ENCODE measurements at regions of chr1 and their contacts with region 1.

Region 1: GRCh38 chr1:202315576-202316168 is 26.1 kb downstream of the UBE2T start:
- DNase-seq: peak; percentile 80
- CTCF ChIP-seq: peak; percentile 96

Region 2: GRCh38 chr1:202205491-202206190 is 110.0 kb before region 1 on chr1:
- CTCF ChIA-PET with region 1: no interaction called
- POLR2A ChIA-PET with region 1: no interaction called
- DNase-seq: no peak
- CTCF ChIP-seq: no peak

Region 3: GRCh38 chr1:202274611-202275010 is 41.1 kb before region 1 on chr1:
- CTCF ChIA-PET with region 1: interaction called, 10 read pairs
- POLR2A ChIA-PET with region 1: no interaction called
- DNase-seq: peak; percentile 50
- CTCF ChIP-seq: peak; percentile 56

Region 4: DNA sequence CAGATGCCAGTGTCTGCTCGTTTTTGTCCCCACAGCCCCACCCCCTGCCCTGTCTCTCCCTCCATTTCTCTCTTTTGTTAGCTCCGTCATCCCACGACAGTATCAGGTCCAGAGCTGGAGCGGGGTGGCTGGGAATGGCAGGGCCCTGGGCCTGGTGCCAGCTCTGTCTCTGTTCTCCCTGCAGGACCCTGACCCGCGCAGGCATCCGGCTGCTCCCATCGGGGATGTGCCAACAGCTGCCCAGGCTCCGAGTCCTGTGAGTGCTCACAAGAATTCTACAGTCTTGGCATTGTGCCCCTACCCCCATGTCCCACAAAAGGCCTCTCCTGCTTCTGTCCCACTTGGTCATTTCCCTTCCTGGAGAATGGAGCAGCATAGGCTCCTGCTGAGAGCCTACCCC is 11.3 kb before region 1 on chr1:
- CTCF ChIA-PET with region 1: interaction called, 18 read pairs
- POLR2A ChIA-PET with region 1: no interaction called
- DNase-seq: no peak
- CTCF ChIP-seq: no peak

Region 5: GRCh38 chr1:202329891-202330290 is 14.2 kb after region 1 on chr1:
- CTCF ChIA-PET with region 1: interaction called, 17 read pairs
- POLR2A ChIA-PET with region 1: no interaction called
- DNase-seq: no peak
- CTCF ChIP-seq: no peak

Region 6: DNA sequence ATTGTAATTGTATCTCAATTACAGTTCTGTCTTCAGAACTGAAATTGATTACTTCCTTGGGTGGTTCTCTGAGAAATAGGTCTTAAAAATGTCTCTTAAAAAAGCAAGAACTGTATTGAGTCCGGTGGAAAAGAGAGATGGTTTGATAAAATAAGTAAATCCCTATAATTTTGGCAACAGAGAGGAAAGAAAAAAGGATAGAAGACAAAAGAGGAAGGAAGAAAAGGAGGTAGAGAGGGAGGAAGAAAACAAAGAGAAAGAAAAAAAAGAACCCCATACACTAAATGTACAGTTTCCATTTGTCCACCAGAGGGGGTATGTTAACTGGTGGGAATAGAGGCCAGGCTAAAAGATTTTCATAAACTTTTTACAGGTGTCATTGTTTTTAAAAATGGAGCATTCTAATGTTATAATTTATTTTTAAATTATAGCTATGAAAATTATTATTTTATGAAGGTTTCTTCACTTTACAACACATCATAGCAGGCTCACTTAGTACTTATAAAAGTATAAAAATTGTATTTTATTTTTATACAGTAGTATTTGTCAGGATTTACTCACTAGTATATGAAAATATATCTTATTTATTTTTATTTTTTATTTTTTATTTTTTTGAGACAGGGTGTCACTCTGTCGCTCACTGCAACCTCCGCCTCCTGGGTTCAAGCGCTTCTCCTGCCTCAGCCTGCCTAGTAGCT is 28.1 kb after region 1 on chr1:
- CTCF ChIA-PET with region 1: no interaction called
- POLR2A ChIA-PET with region 1: no interaction called
- DNase-seq: no peak
- CTCF ChIP-seq: peak; percentile 51

Measured in GM10248 (cell line).